CD8-positive, alpha-beta T cell (primary cell): ENCODE measurements at regions of chr3 and their contacts with region 1.

Region 1: DNA sequence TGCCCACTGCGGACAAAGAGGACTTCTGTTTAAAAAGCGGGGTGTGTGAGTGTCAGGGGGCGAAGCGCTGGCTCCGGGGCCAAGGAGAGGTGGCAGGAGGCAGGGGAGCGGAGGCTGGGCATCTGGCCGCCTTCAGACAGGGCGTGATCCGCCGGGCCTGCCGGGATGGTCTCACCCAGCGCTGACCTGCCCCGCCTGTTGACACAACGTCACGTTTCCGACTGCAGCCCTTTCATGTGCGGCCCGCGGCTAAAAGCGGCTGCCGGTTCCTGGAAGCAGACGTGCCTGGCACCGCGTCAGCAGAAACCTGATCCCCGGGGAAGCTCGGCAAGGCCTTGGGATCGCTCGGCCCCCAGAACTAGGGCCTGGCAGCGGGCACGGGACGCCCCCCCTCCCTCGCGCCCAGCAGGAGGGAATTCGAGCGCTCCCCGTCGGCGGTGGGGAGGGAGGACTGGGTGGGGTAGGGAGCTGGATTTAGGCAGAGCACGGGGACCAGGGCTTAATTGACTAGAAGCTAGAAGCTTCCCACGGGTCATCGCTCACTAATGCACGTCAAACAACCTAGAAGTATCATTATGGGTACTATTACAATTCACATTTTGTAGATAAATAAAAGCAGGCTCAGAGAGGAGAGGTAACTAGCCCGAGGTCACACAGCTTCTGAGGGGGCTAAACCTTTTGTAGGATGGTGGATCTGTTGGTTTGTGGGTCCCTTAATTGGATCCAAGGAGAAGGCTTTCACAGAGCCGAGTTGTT is 7.7 kb downstream of the BHLHE40 start:
- DNase-seq: peak; percentile 56 to 86 (median 70)
- ATAC-seq: peak; percentile 35
- H3K4me3 ChIP-seq: peak overlapping the region; percentile 52 to 59
- H3K4me3 Mint-ChIP-seq: peak overlapping the region; percentile 83
- H3K27ac ChIP-seq: peak overlapping the region; percentile 19 to 74
- H3K27ac Mint-ChIP-seq: peak overlapping the region; percentile 88
- H3K4me1 ChIP-seq: peaks cover 43% of the 10 kb centered on the region
- H3K4me1 Mint-ChIP-seq: peaks cover 39% of the 10 kb centered on the region
- H3K27me3 ChIP-seq: no peaks in the 10 kb centered on the region
- H3K27me3 Mint-ChIP-seq: no peaks in the 10 kb centered on the region
- CTCF ChIP-seq: no peak

Region 2: DNA sequence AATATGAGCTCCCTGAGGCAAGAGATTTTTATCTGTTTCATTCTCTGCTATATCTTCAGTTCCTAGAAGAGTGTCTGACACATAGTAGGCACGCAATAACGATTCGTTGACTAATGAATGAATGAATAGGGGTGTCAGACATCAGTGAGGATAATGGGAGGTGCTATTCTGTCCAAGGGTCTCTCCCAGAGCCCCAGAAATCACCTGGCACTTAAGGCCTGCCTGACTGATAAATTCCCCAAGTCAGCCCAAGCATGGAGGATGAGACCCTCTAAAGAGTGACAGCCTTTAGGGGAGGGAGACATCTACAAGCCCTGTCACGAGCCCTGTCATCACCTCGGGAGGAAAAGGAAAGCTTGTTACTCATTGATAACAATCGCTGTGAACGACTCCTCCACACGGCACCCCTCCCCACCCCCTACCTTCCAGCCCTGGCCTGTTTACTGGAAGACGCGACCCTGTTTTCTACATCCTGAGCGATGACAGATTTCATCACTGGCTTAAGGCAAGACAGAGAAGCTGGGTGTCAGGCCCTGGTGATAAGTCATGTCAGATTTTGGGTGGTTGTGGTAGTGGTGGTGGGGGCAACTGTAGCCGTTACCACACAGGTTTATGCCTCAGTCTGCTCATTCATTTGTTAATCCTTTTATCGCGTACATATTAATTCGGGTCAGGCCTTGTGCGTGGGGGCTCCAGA is 15.4 kb after region 1 on chr3:
- CTCF ChIA-PET with region 1: interaction called, 6 read pairs
- POLR2A ChIA-PET with region 1: no interaction called
- intact Hi-C with region 1: loop called (anchors 2 kb)
- DNase-seq: peak in 6 of 9 experiments; percentile 47 to 88 (median 72)
- ATAC-seq: peak; percentile 75
- H3K4me3 ChIP-seq: no peak overlapping the region
- H3K4me3 Mint-ChIP-seq: no peak overlapping the region
- H3K27ac ChIP-seq: peak overlapping the region in 1 of 2 experiments; percentile 38
- H3K27ac Mint-ChIP-seq: peak overlapping the region; percentile 79
- H3K4me1 ChIP-seq: peaks cover 9% of the 10 kb centered on the region
- H3K4me1 Mint-ChIP-seq: peaks cover 26% of the 10 kb centered on the region
- H3K27me3 ChIP-seq: no peaks in the 10 kb centered on the region
- H3K27me3 Mint-ChIP-seq: no peaks in the 10 kb centered on the region
- CTCF ChIP-seq: no peak

Region 3: DNA sequence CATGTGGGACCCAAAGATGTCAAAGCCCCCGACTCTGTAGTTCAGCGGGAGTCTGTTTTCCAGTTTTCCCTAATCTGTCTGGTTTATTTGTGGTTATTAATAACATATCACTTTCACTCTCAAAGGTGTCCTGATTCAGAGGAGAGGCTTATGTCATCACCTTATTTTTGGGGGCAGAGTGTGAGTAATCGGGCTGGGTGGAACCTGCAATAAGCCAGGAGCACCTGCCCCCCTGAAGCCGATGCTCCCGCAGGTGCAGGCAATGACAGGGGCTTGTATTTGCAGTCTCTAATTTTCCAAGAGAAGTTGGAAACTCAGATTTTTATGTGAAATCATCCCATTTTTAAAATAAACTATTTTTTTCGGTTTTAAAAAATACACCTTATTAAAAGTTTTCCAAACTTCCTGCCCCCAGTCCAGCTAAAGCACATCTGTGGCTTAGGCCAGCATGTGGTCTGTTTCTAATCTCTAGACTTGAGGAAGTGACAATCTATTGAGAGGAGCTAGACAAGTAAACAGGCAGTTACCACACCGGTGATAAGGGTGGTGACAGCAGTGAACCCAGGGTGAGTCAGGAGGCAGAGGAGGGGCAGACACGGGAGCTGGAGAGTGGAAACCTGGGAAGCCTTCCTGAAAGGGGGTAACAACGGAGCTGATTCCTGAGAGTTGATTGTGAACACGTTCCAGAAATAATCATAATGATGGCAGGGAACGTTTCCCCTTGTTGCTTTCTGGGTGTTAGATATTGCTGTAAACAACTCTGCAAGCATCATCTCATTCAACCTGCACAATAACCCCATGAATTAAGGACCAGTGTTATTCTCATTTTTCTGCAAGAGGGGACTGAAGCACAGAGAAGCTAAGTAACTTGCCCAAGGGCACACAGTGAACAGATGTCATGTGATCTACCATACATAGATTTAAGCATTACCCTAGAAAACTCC is 29.5 kb after region 1 on chr3:
- CTCF ChIA-PET with region 1: interaction called, 13 read pairs
- POLR2A ChIA-PET with region 1: interaction called, 4 read pairs
- intact Hi-C with region 1: loop called in 1 of 2 experiments (anchors 1 kb)
- DNase-seq: peak in 8 of 9 experiments; percentile 32 to 77 (median 58)
- ATAC-seq: peak; percentile 53
- H3K4me3 ChIP-seq: no peak overlapping the region
- H3K4me3 Mint-ChIP-seq: no peak overlapping the region
- H3K27ac ChIP-seq: peak overlapping the region in 1 of 2 experiments; percentile 1
- H3K27ac Mint-ChIP-seq: peak overlapping the region; percentile 77
- H3K4me1 ChIP-seq: peaks cover 24% of the 10 kb centered on the region
- H3K4me1 Mint-ChIP-seq: peaks cover 42% of the 10 kb centered on the region
- H3K27me3 ChIP-seq: no peaks in the 10 kb centered on the region
- H3K27me3 Mint-ChIP-seq: peaks cover 2% of the 10 kb centered on the region
- CTCF ChIP-seq: no peak

Region 4: DNA sequence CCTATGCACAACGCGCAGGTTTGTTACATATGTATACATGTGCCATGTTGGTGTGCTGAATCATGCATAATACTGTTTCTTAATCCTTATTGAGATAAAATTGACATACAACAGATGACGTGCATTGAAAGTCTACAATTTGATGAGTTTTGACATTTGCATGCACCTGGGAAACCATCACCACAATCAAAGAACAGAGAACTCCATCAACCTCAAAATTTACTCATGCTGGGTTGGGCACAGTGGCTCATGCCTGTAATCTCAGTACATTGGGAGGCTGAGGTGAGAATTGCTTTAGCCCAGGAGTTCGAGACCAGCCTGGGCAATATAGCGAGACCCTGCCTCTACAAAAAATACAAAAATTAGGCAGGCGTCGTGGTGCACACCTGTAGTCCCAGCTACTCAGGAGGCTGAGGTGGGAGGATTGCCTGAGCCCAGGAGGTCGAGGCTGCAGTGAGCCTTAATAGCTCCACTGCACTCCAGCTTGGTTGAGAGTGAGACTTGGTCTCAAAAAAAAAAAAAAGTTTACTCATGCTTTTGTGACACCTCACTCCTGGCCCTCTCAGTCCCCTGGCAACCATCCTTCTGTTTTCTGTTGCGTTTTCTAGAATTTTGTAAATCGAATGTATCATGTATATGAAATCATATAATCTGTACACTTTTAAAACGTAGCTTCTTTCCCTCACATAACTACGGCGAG is 48.9 kb after region 1 on chr3:
- CTCF ChIA-PET with region 1: no interaction called
- POLR2A ChIA-PET with region 1: no interaction called
- intact Hi-C with region 1: no loop called
- DNase-seq: no peak
- ATAC-seq: no peak
- H3K4me3 ChIP-seq: no peak overlapping the region
- H3K4me3 Mint-ChIP-seq: no peak overlapping the region
- H3K27ac ChIP-seq: no peak overlapping the region
- H3K27ac Mint-ChIP-seq: no peak overlapping the region
- H3K4me1 ChIP-seq: no peaks in the 10 kb centered on the region
- H3K4me1 Mint-ChIP-seq: peaks cover 2% of the 10 kb centered on the region
- H3K27me3 ChIP-seq: no peaks in the 10 kb centered on the region
- H3K27me3 Mint-ChIP-seq: peaks cover 3% of the 10 kb centered on the region
- CTCF ChIP-seq: no peak